GM12878 (cell line): ENCODE measurements at regions of chr7 and their contacts with region 1.

Region 1: GRCh38 chr7:101363734-101364374 is 1.2 kb downstream of the COL26A1 start:
- DNase-seq: no peak
- ATAC-seq: peak; percentile 100
- H3K4me3 ChIP-seq: no peak overlapping the region
- H3K27ac ChIP-seq: no peak overlapping the region
- H3K4me1 ChIP-seq: no peaks in the 10 kb centered on the region
- H3K27me3 ChIP-seq: peaks cover 4 to 6% of the 10 kb centered on the region in 2 experiments; a peak in 3 of 4 replicates
- CTCF ChIP-seq: peak; percentile 74 to 82 (median 74)
- EP300 ChIP-seq: no peak
- POLR2A ChIP-seq: no peak
- RAD21 ChIP-seq: peak; percentile 67

Region 2: GRCh38 chr7:101288439-101288838 is 75.4 kb before region 1 on chr7:
- CTCF ChIA-PET with region 1: no interaction called
- POLR2A ChIA-PET with region 1: no interaction called
- RAD21 ChIA-PET with region 1: no interaction called
- SMC1A ChIA-PET with region 1: no interaction called
- in situ Hi-C with region 1: no loop called
- intact Hi-C with region 1: no loop called
- DNase-seq: no peak
- ATAC-seq: no peak
- H3K4me3 ChIP-seq: no peak overlapping the region
- H3K27ac ChIP-seq: no peak overlapping the region
- H3K4me1 ChIP-seq: no peaks in the 10 kb centered on the region
- H3K27me3 ChIP-seq: no peaks in the 10 kb centered on the region; a peak in 2 of 4 replicates
- CTCF ChIP-seq: no peak
- EP300 ChIP-seq: no peak
- POLR2A ChIP-seq: no peak
- RAD21 ChIP-seq: no peak

Region 3: DNA sequence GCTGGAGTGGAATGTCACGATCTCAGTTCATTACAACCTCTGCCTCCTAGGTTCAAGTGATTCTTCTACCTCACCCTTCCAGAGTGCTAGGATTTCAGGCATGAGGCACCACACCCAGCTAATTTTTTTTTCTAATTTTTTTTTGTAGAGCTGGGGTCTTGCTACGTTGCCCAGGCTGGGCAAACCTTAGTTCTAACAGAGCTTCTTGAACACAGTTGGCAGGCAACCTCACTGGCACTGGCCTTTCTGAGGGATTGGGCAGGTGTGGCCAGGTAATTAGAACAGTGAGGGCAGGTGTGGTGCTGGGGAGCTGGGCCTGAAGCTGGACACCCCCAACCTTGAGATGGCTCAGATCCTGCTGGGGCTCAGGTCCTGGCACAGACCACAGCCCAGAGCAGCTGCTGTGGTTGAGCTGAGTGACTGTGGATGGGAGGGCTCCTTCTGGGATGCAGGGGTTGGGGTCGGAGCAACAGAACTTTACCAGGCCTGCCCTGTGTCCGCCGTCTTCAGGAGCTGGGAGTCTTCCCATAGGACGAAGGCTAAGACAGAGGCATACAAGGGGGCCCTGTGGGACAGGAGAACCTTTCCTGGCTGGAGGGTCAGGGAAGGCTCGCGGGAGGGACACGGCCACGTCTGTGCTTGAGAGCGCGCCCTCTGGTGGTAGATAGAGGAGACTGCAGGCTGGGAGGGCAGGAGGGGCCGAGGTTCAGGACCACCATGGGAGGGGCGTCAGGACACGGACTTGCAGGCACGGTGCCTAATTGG is 47.1 kb after region 1 on chr7:
- CTCF ChIA-PET with region 1: interaction called, 26 read pairs
- POLR2A ChIA-PET with region 1: no interaction called
- RAD21 ChIA-PET with region 1: interaction called, 4 read pairs
- SMC1A ChIA-PET with region 1: interaction called, 3 read pairs
- in situ Hi-C with region 1: no loop called
- intact Hi-C with region 1: loop called (anchors 1 kb)
- DNase-seq: no peak
- ATAC-seq: peak; percentile 62
- H3K4me3 ChIP-seq: no peak overlapping the region
- H3K27ac ChIP-seq: no peak overlapping the region
- H3K4me1 ChIP-seq: no peaks in the 10 kb centered on the region
- H3K27me3 ChIP-seq: no peaks in the 10 kb centered on the region
- CTCF ChIP-seq: peak; percentile 47 to 79 (median 71)
- EP300 ChIP-seq: no peak
- POLR2A ChIP-seq: no peak
- RAD21 ChIP-seq: peak; percentile 52

Region 4: GRCh38 chr7:101436857-101437576 is 73.2 kb after region 1 on chr7:
- CTCF ChIA-PET with region 1: interaction called, 25 read pairs
- POLR2A ChIA-PET with region 1: interaction called, 3 read pairs
- RAD21 ChIA-PET with region 1: interaction called, 10 read pairs
- SMC1A ChIA-PET with region 1: interaction called, 9 read pairs
- in situ Hi-C with region 1: no loop called
- intact Hi-C with region 1: loop called (anchors 1 kb)
- DNase-seq: no peak
- ATAC-seq: 0 out of 3 replicates have a peak, but pooled peaks have one; percentile 18
- H3K4me3 ChIP-seq: no peak overlapping the region
- H3K27ac ChIP-seq: no peak overlapping the region
- H3K4me1 ChIP-seq: no peaks in the 10 kb centered on the region
- H3K27me3 ChIP-seq: no peaks in the 10 kb centered on the region
- CTCF ChIP-seq: no peak
- EP300 ChIP-seq: no peak
- POLR2A ChIP-seq: no peak
- RAD21 ChIP-seq: no peak

Region 5: GRCh38 chr7:101507791-101508252 is 144.0 kb after region 1 on chr7:
- CTCF ChIA-PET with region 1: interaction called, 7 read pairs
- POLR2A ChIA-PET with region 1: no interaction called
- RAD21 ChIA-PET with region 1: interaction called, 5 read pairs
- SMC1A ChIA-PET with region 1: interaction called, 3 read pairs
- in situ Hi-C with region 1: no loop called
- intact Hi-C with region 1: loop called (anchors 1 kb)
- DNase-seq: no peak
- ATAC-seq: peak; percentile 59
- H3K4me3 ChIP-seq: no peak overlapping the region
- H3K27ac ChIP-seq: no peak overlapping the region
- H3K4me1 ChIP-seq: peaks cover 8% of the 10 kb centered on the region
- H3K27me3 ChIP-seq: no peaks in the 10 kb centered on the region
- CTCF ChIP-seq: peak; percentile 60 to 83 (median 74)
- EP300 ChIP-seq: no peak
- POLR2A ChIP-seq: no peak
- RAD21 ChIP-seq: peak; percentile 56

Region 6: GRCh38 chr7:101586078-101586905 is 222.4 kb after region 1 on chr7:
- CTCF ChIA-PET with region 1: no interaction called
- POLR2A ChIA-PET with region 1: no interaction called
- RAD21 ChIA-PET with region 1: no interaction called
- SMC1A ChIA-PET with region 1: no interaction called
- in situ Hi-C with region 1: no loop called
- intact Hi-C with region 1: no loop called
- DNase-seq: no peak
- ATAC-seq: no peak
- H3K4me3 ChIP-seq: no peak overlapping the region
- H3K27ac ChIP-seq: no peak overlapping the region
- H3K4me1 ChIP-seq: no peaks in the 10 kb centered on the region
- H3K27me3 ChIP-seq: no peaks in the 10 kb centered on the region
- CTCF ChIP-seq: no peak
- EP300 ChIP-seq: no peak
- POLR2A ChIP-seq: no peak
- RAD21 ChIP-seq: no peak

Region 7: GRCh38 chr7:102272075-102272917 is 908.4 kb after region 1 on chr7:
- CTCF ChIA-PET with region 1: no interaction called
- POLR2A ChIA-PET with region 1: no interaction called
- RAD21 ChIA-PET with region 1: no interaction called
- SMC1A ChIA-PET with region 1: no interaction called
- in situ Hi-C with region 1: loop called (anchors 25 kb)
- intact Hi-C with region 1: no loop called
- DNase-seq: no peak
- ATAC-seq: peak; percentile 98
- H3K4me3 ChIP-seq: no peak overlapping the region
- H3K27ac ChIP-seq: no peak overlapping the region
- H3K4me1 ChIP-seq: no peaks in the 10 kb centered on the region
- H3K27me3 ChIP-seq: no peaks in the 10 kb centered on the region; a peak in 1 of 4 replicates
- CTCF ChIP-seq: peak; percentile 92 to 97 (median 95); a peak in 5 of 6 replicates
- EP300 ChIP-seq: no peak
- POLR2A ChIP-seq: no peak
- RAD21 ChIP-seq: peak; percentile 96